Right ventricle myocardium superior (tissue), 1 donor: ENCODE measurements at regions of chr9 and their contacts with region 1.

Region 1: DNA sequence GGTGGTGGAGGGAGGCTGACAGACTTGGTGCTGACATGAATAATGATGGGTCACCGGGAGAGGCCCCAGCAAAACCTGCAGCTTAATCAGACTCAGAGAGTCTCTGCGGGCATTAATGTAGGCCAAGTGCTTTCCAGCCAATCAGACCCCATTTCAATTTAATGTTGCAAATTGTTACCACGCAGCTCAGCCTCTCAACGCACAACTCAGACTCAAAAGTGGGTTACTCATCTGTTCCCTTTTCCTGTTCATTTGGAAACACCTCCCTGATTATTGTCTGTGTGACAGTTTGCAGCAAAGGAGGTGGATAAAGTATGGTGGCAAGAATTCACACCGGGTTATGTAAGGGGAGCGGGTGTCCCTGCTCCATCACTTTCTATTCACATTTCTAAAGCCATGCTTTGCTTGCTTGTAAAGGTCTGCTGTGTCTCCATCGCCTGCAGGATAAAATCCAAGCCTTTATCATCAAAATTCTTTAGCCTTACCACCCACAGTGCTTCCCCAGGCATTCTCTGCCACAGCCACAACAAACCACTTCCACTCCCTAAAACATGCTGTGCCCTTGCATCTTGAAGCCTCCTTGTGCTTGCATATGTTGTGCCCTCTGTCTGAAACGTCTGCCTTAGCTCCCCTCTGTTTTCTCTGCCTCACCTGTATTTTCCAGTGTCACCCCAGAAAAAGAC is 156.5 kb downstream of the ASTN2 start:
- DNase-seq: no peak
- ATAC-seq: no peak

Region 2: DNA sequence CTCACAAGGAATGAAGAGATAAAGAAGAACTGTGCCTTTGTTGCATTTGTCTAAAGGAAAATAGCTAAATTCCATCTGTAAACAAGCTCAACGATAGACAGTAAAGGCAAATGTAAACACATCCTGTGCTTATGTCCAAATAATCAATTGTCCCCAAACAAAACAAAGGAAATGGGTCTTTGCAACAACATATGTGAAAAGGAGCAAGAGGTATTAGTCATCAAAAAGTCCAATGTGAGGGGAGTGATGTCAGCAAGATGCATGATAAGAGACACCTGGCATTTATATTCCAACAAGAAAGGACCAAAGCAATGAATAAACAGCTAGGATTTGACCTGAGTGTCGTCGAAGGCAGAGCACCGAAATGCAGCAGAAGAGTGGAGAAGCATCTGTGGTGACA is 52.5 kb before region 1 on chr9:
- intact Hi-C with region 1: loop called (anchors 10 kb)
- DNase-seq: no peak
- ATAC-seq: no peak